ENCODE measurements at regions of chr9 and their contacts with region 1.

Region 1: GRCh38 chr9:114155263-114155972 is at the start of gene COL27A1:
- DNase-seq: peak; percentile 71
- H3K4me3 Mint-ChIP-seq: peak within 1 kb of the TSS; percentile 87
- H3K27ac Mint-ChIP-seq: peak within 1 kb of the TSS; percentile 74
- H3K4me1 Mint-ChIP-seq: peaks cover 16% of the 10 kb centered on the region
- H3K27me3 Mint-ChIP-seq: peaks cover 49% of the 10 kb centered on the region
- total RNA-seq, gene COL27A1: 6.1 and 7.4 TPM in 2 replicates

Region 2: DNA sequence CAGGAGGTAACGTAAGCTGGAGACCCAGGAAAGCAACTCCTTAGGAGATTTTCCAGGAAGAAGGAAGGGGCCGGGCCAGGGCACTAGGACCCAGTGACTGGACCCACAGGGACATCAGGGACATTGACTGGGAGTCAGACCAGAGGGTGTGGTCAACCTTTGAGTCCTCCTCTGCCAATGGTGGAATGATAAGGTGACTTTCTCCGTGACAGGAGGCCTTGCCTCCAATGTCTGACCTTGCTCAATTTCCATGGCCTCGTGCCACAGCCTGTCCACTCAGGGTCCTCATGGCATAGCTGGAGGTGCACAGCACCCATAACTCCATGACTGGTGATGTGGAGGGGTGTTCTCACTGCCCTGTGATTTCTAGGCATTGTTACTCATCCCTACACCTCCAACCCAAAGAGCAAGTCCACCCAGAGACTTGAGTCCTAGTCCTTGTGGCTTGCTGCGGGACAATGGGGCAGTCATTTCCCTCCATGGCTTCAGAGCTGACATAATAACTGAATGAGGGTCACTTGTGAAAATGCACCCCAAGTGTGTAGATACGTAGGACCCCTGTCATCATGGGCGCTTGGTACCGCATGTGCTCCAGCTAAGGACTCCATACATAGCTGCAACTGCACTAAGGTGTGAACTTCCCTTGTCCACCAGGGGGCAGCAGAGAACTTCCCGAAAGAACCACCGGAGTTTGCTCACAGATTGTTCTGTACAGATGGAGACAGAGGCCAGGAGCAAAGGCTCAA is 73.2 kb before region 1 on chr9:
- intact Hi-C with region 1: loop called (anchors 1 kb)
- DNase-seq: peak; percentile 65
- H3K4me3 Mint-ChIP-seq: no peak overlapping the region
- H3K27ac Mint-ChIP-seq: no peak overlapping the region
- H3K4me1 Mint-ChIP-seq: no peaks in the 10 kb centered on the region
- H3K27me3 Mint-ChIP-seq: no peaks in the 10 kb centered on the region

Region 3: DNA sequence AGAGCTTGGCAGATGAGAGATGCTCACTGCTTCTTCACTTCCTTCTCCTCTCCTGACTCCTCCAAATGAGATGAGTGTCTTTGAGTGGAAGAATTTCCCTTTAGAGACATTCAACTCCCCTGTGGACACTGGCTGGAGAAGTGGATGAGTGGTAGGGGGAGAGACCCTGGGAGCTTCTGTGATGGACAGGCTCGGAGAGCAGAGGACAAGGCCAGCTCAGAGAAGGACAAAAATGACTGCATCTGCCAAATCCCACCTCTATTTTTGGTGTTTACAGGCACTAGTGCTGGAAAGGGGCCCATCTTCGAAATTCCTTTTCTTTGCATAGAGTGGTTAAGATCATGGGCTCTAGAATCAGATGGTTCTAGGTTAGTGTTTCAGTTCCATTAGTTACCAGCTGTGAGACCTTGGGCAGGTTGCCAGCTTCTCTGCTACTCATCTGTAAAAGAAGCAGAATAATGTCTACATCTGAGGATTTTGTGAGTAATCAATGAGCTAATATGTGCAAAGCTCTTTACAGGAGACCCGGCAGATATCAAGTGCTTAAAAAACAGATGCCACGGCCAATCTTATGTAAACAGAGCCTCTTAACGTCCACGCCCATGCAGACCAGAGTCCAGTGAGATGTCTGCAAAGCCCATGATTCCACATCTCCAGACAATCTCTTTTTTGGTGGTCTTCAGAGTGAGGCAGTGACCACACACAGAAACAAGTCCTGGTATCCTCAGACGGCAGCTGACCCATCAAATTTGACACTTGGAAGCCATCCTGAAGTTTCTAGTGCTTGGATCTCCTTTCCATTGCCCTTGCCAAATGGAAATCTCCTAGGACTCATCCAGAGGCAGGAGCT is 13.6 kb before region 1 on chr9:
- intact Hi-C with region 1: no loop called
- DNase-seq: no peak
- H3K4me3 Mint-ChIP-seq: no peak overlapping the region
- H3K27ac Mint-ChIP-seq: no peak overlapping the region
- H3K4me1 Mint-ChIP-seq: no peaks in the 10 kb centered on the region
- H3K27me3 Mint-ChIP-seq: peaks cover 7% of the 10 kb centered on the region

Region 4: GRCh38 chr9:114186605-114187289 is 31.3 kb after region 1 on chr9:
- intact Hi-C with region 1: no loop called
- DNase-seq: no peak
- H3K4me3 Mint-ChIP-seq: no peak overlapping the region
- H3K27ac Mint-ChIP-seq: no peak overlapping the region
- H3K4me1 Mint-ChIP-seq: no peaks in the 10 kb centered on the region
- H3K27me3 Mint-ChIP-seq: no peaks in the 10 kb centered on the region

Region 5: DNA sequence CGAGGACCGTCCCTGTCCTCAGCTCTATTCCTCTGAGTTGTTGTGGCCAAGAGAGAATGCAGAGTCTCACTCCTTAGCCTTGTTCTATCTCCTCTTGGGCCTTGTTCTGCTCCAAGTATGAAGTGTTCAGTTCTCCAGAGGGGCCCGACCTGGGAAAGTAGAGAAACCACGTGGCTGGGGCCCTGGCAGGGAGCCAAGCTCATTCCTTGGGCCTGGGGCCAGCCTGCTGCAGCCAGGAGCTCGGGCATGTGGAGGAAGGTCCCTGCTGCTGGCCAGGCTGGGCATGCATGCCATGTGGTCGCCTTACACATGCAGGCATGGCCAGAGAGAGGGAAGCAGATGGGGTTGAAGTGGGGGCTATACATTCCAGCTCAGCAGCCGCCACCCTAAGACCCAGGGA is 60.7 kb after region 1 on chr9:
- intact Hi-C with region 1: no loop called
- DNase-seq: no peak
- H3K4me3 Mint-ChIP-seq: no peak overlapping the region
- H3K27ac Mint-ChIP-seq: no peak overlapping the region
- H3K4me1 Mint-ChIP-seq: no peaks in the 10 kb centered on the region
- H3K27me3 Mint-ChIP-seq: no peaks in the 10 kb centered on the region

Region 6: DNA sequence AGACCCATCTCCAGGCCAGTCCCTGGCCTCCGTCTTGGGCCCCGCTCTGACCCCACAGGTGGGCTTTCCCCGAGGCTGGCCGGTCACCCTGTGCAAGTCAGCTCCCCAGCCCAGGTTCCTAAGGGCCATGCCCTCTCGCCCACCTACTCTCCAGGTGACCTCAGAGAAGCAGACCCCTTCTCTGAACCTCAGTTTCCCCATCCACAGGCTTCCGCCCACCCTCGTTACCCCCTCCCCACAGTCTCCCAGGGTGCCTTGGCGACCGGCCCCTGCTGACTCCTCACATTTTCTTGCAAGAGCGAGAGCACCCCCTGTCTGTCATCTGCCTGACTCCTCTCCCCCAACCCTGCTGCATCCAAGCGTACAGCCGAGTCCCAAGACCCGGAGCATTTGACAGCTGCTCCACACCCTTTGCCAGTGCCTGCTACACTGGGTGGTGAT is 116.2 kb after region 1 on chr9:
- intact Hi-C with region 1: loop called (anchors 1 kb)
- DNase-seq: no peak
- H3K4me3 Mint-ChIP-seq: no peak overlapping the region
- H3K27ac Mint-ChIP-seq: no peak overlapping the region
- H3K4me1 Mint-ChIP-seq: no peaks in the 10 kb centered on the region
- H3K27me3 Mint-ChIP-seq: no peaks in the 10 kb centered on the region

Region 7: GRCh38 chr9:114397848-114398605 is 242.6 kb after region 1 on chr9:
- intact Hi-C with region 1: loop called (anchors 5 kb)
- DNase-seq: peak; percentile 94
- H3K4me3 Mint-ChIP-seq: peak overlapping the region; percentile 97
- H3K27ac Mint-ChIP-seq: peak overlapping the region; percentile 86
- H3K4me1 Mint-ChIP-seq: peaks cover 46% of the 10 kb centered on the region
- H3K27me3 Mint-ChIP-seq: peaks cover 3% of the 10 kb centered on the region

Region 8: DNA sequence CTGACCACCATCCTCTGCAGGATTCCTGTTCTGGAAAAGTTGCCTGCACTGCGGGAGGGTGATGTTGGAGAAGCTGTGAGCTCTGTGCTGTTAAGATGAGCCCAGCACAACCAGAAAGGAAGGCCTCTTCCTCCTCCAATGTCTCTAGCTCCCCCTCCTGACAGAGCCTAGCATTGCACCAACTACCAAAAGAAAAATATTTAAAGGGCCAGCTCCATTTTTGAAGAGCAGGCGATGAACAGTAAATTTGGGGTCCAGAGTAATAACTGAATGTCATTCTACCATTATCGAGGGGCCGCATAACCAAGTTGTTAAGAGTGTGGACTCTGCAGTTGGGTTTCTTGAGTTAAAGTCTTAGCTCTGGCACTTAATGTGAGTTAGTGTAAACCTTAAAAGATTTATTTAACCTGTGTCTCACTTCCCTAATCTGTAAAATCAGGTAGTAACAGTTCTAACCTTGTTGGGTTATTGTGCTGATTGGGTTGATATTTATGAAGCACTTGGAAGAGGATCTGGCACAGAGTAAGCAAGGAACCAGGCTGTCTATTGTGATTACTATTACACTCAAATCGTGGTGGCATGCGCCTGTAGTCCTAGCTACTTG is 498.2 kb after region 1 on chr9:
- intact Hi-C with region 1: loop called (anchors 10 kb)
- DNase-seq: peak; percentile 76
- H3K4me3 Mint-ChIP-seq: no peak overlapping the region
- H3K27ac Mint-ChIP-seq: peak overlapping the region; percentile 54
- H3K4me1 Mint-ChIP-seq: peaks cover 21% of the 10 kb centered on the region
- H3K27me3 Mint-ChIP-seq: no peaks in the 10 kb centered on the region

Measured in activated T-helper 1 cell treated with anti-CD3 and anti-CD28 coated beads, Interleukin-12 subunit alpha, Interleukin-12 subunit beta, Interleukin-2, Interleukin-4 antibody, amounts not matched to agents 30 ng/mL and 10 ng/mL and 1 ng/mL, durations not matched to agents 14 hours and 24 hours and 36 hours (primary cell).